CD4-positive, alpha-beta memory T cell (primary cell): ENCODE measurements at regions of chr9 and their contacts with region 1.

Region 1: DNA sequence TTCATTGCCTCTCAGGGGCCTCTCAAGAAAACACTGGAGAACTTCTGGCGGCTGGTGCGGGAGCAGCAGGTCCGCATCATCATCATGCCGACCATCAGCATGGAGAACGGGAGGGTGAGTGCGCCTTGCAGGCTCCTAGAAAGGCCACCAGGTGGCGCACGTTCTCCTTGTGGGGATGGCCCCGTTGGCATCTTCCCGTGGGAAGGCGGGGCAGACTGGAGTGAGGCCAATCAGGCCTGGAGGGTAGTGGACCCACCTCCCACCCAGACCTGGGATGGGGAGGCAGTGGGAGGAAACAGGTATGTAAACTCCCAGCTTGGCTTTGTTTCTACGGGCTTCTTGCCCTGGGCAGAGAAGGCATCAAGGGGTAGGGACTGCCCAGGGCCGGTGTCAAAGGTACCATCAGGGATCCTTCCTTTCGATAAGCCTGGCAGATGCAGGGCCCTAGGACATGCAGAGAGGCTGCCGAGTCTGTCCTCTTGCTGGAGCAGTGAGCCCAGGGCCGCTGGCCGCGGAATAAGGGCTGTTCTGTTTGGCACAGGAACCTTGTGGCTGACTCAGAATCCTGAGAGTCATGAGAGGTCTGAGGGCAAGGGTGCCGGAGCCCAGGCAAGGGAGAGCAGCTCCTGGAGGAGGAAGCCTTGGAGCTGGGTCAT is 18.9 kb upstream of the SPTLC1 start:
- DNase-seq: peak; percentile 63 to 70 (median 64)
- H3K4me3 ChIP-seq: peak overlapping the region in 1 of 2 donors; percentile 13
- H3K4me3 Mint-ChIP-seq: peak overlapping the region; percentile 25 to 76 (median 57)
- H3K27ac ChIP-seq: no peak overlapping the region
- H3K27ac Mint-ChIP-seq: peak overlapping the region in 4 of 7 donors; percentile 2 to 76 (median 9)
- H3K4me1 ChIP-seq: peaks cover 9% of the 10 kb centered on the region
- H3K4me1 Mint-ChIP-seq: peaks cover 6 to 13% (median 9%) of the 10 kb centered on the region in 4 donors
- H3K27me3 ChIP-seq: no peaks in the 10 kb centered on the region
- H3K27me3 Mint-ChIP-seq: peaks cover 8 to 26% of the 10 kb centered on the region in 2 donors

Region 2: DNA sequence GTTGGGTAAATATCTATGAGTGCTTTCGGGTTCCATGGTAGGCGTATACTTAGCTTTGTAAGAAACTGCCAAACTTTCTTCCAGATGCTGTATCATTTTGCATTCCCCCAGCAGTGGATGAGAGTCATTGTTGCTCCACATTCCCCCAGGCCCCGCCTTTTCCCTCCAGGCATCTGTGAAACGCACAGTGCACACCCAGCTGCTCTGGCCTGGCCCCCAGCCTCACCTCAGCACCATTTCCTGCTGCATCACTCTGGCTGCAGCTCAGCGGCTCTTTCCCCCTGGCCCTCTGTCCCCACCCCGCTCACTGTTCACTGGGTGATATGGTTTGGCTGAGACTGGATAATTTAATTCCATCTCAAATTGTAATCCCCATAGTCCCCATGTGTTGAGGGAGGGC is 57.7 kb after region 1 on chr9:
- CTCF ChIA-PET with region 1: no interaction called
- POLR2A ChIA-PET with region 1: no interaction called
- intact Hi-C with region 1: no loop called
- DNase-seq: no peak
- H3K4me3 ChIP-seq: no peak overlapping the region
- H3K4me3 Mint-ChIP-seq: no peak overlapping the region
- H3K27ac ChIP-seq: no peak overlapping the region
- H3K27ac Mint-ChIP-seq: no peak overlapping the region
- H3K4me1 ChIP-seq: no peaks in the 10 kb centered on the region
- H3K4me1 Mint-ChIP-seq: no peaks in the 10 kb centered on the region
- H3K27me3 ChIP-seq: no peaks in the 10 kb centered on the region
- H3K27me3 Mint-ChIP-seq: peaks cover 14 to 15% of the 10 kb centered on the region in 2 donors

Region 3: GRCh38 chr9:92634712-92635605 is 500.9 kb after region 1 on chr9:
- CTCF ChIA-PET with region 1: interaction called, 52 read pairs
- POLR2A ChIA-PET with region 1: no interaction called
- intact Hi-C with region 1: loop called (anchors 1 kb)
- DNase-seq: peak; percentile 40 to 54 (median 46)
- H3K4me3 ChIP-seq: no peak overlapping the region
- H3K4me3 Mint-ChIP-seq: no peak overlapping the region
- H3K27ac ChIP-seq: no peak overlapping the region
- H3K27ac Mint-ChIP-seq: peak overlapping the region in 2 of 7 donors; percentile 24 to 51
- H3K4me1 ChIP-seq: no peaks in the 10 kb centered on the region
- H3K4me1 Mint-ChIP-seq: no peaks in the 10 kb centered on the region
- H3K27me3 ChIP-seq: no peaks in the 10 kb centered on the region
- H3K27me3 Mint-ChIP-seq: no peaks in the 10 kb centered on the region